ENCODE measurements at regions of chr15 and their contacts with region 1.

Region 1: GRCh38 chr15:57146506-57147201 is 228.2 kb downstream of the TCF12 start:
- DNase-seq: no peak
- ATAC-seq: peak; percentile 65

Region 2: GRCh38 chr15:56383010-56383409 is 763.6 kb before region 1 on chr15:
- intact Hi-C with region 1: no loop called
- DNase-seq: no peak
- ATAC-seq: no peak

Region 3: DNA sequence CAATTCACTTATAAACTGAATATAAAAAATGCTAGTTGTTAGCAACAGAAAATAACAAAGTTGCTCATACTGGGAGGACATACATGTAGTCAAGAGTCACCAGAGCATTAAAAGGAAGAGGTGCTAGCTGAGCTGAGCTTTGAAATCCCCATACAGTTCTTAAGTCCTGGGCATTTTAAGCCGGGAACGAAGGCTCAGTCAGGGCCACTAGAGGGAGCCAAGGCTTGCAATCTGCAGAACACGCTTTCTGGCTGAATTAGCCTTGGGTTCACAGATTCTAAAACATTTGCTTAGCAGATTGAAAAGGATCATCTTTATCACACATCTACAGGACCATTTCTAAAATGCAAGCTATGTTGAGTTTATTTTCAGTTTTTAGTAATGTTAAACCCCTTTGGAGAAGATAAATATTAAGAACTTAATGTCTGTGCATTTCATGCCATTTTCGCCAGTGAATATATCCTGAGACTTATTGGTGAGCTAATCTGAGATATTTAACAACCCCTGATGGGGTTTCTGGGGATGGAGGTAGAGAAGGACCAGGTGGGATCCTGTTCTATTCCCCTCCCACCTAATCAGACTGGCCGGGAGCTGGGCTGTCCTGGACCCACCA is 655.4 kb before region 1 on chr15:
- intact Hi-C with region 1: loop called (anchors 5 kb)
- DNase-seq: peak; percentile 66
- ATAC-seq: peak; percentile 71

Region 4: GRCh38 chr15:56984681-56985481 is 161.8 kb before region 1 on chr15:
- intact Hi-C with region 1: no loop called
- DNase-seq: no peak
- ATAC-seq: peak; percentile 53

Region 5: DNA sequence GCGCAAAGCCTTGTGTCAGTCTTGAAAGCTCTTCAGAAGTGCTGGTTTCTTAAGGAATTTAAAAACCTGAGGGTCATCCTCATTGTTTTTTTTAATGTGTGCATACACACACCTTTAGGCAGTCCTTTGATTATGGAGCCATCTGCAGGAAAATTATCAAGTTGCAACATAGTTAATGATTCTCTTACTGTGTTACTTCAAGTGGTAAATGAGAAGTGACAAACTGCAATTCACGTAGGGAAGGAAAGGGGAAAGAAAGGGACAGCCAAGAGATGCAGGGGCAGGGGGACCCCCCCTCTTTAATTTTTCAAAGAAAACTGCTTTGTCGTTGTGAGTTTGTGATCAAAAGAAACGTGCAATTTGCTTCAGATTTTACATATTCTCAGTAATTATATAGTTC is 67.2 kb after region 1 on chr15:
- intact Hi-C with region 1: loop called (anchors 2 kb)
- DNase-seq: no peak
- ATAC-seq: peak; percentile 79

Region 6: DNA sequence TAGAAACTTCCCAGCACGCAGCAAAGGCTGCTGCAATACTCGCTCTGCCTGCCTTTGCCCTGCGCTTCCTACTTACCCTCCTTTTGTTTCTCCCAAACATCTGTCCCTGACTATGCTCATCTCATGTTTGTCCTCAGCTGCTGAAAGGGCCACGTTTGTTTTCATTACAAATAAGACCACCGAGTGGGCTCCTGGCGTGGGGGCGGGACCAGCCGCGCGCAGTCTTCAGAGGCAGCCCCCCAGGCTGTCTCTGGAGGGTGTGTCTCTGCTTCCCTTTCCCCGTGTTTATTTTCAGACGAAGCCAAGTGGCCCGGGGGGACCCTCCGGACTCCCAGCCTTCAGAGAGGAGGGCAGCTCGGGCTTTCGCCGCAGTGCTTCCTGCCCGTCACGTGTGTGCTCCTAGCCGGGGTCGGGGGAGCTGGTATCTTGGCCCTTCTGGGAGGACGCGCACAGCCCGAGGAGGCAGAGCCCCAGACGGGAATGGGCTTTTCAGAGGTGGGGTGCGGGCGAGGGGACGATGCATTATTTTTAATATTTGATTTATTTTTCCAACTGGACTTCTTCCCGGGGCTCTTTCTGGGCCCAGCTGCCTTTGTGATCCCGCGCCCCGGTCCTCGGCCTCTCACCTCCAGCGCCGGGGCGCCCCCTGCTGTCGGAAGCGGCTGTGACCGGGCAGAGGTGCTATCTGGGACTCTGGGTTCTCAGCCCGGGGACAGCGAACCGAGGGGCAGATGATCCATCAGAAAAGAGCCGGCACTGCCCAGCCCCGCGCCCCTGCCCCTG is 159.7 kb after region 1 on chr15:
- intact Hi-C with region 1: loop called (anchors 5 kb)
- DNase-seq: peak; percentile 95
- ATAC-seq: peak; percentile 95

Region 7: GRCh38 chr15:57527382-57528091 is 380.9 kb after region 1 on chr15:
- intact Hi-C with region 1: loop called (anchors 10 kb)
- DNase-seq: no peak
- ATAC-seq: peak; percentile 76